GM10248 (cell line): ENCODE measurements at regions of chr14 and their contacts with region 1.

Region 1: GRCh38 chr14:72948481-72949138 is 22.3 kb downstream of the DCAF4 start:
- DNase-seq: peak; percentile 65
- CTCF ChIP-seq: peak; percentile 72

Region 2: DNA sequence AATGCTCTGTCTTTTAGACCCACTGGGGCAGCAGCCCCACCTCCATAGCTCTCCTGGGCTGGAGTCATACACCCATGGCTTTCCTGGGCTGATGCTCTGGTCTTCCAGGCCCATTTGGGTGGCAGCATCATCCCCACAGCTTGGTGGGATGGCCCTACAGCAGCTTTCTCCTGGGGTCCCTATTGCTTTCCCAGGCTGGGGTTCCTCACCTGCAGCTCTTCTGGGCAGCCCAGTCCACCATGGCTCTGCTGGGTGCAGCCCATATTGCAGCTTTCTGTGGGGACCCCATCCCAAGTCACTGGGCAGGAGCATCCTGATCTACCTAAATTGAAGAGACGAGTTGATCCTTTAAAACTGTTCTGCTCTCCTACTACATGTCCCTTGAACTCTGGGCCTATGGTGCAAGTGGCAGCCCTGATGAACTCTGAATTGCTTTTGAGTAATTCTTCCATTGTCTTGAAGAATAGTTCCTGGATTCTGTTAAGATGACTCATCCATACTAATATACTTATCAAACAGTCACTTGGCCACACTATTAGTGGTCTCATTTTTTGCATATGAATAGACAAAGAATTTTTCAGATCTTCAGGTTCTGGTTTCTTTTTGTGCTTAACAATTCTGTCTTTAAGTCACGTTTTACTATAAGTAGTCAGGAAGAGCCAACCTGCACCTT is 444.8 kb before region 1 on chr14:
- CTCF ChIA-PET with region 1: interaction called, 207 read pairs
- POLR2A ChIA-PET with region 1: no interaction called
- DNase-seq: no peak
- CTCF ChIP-seq: no peak

Region 3: DNA sequence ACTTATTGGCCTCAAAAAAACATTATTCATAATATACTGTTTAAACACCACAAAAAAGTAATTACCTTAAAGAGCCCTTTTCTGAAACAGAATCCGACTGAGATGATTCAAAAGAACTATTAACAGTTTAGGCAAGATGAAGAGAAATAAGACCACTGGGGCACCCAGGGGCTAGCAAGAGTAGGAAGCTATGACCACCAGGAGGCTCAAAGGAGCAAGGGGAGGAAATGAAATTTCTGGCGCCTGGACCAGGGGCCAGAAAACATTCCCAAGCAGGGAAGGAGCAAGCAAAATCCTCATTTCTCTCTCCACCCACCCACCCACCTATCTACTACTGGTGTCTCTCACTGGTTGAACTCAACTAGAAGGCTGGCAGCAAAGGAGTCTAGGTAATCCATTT is 28.6 kb before region 1 on chr14:
- CTCF ChIA-PET with region 1: interaction called, 12 read pairs
- POLR2A ChIA-PET with region 1: no interaction called
- DNase-seq: no peak
- CTCF ChIP-seq: no peak

Region 4: DNA sequence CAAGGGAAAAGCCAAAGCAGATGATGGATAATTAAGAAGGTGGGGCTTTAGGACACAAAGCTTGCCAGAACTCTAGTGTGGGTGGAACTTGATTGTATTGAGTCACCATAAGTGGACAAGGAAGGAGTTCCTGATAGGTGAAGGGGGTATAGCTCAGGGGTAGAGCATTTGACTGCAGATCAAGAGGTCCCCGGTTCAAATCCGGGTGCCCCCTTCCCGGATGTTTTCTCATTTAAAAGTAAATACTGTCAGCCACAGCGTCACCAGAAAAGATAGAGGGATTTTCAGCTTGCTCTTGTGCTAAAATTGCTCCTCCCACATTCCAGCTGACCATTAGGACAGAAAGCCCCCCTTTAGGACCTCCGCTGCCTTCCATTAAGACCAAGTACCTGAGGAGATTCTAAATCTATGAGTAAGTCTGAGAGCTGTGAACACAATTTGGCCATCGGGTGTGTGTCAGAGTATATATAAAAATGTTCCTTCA is 14.3 kb after region 1 on chr14:
- CTCF ChIA-PET with region 1: interaction called, 29 read pairs
- POLR2A ChIA-PET with region 1: no interaction called
- DNase-seq: no peak
- CTCF ChIP-seq: no peak

Region 5: DNA sequence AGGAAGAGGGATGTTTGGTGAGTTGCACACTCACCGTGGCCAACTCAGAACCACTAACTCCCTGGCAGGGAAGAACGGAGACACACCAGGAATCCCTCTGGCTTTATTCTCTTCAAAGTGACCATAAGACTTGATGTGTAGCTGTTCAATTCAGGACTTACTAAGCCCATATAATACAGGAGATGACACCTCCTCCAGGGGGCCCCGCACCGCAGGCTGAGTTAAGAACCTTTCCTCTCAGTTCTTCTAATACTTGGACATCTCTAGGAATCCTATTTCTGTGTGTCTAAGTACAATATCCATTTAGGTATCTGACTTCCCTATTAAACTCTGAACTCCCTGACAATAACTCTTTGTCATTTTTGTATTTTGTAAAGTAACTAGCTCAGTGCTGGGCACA is 27.2 kb after region 1 on chr14:
- CTCF ChIA-PET with region 1: interaction called, 23 read pairs
- POLR2A ChIA-PET with region 1: no interaction called
- DNase-seq: no peak
- CTCF ChIP-seq: no peak